Ascending aorta (tissue), 2 donors: ENCODE measurements at regions of chr20 and their contacts with region 1.

Region 1: DNA sequence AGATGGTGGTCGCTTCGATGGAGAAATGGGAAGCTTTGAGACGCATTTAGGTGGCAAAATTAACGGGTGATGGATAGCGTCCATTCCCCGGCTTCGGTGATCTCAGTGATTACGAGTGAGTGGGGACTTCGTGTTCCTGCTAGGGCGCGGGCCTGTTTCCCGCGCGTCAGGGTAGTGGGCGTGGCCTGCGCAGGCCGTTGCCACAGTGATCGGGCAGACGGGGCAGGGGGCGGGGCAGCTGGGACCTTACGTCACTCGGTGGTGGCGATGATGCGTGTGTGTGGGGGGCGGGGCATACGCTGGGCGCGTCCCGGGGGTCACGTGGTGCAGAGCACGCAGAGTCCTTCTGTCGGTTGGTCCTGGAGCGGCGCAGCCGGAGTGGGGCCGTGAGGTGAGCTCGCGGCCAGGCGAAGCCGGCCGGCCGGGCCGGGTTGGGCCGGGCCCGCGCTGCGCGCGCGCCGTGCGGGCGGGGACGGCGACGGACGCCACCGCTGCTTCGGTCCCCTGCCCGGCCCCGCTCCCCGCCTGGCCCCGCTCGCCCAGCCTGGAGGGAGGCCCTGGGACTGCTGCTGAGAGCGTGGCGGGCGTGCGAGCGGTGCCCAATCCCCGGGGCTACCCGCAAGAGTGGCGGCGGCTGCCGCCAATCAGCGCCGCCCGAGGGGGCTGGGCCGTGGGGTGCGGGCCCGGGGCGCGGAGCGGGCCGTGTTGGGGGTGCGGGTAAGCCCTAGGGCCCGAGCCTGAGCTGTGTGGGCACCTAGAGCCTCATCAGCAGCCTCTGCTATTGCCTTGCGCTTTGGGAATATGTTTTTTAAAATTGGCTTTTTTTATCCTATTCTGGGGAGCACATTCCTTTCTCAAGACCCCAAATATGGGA is at the start of gene PHF20:
- DNase-seq: peak; percentile 96 to 100
- H3K4me3 ChIP-seq: peak within 1 kb of the TSS; percentile 85
- H3K27ac ChIP-seq: peak within 1 kb of the TSS; percentile 96 to 98
- H3K4me1 ChIP-seq: peaks cover 0 to 30% of the 10 kb centered on the region in 2 donors
- H3K27me3 ChIP-seq: no peaks in the 10 kb centered on the region
- CTCF ChIP-seq: peak in 1 of 3 experiments; percentile 60
- total RNA-seq, gene PHF20: 109 TPM

Region 2: GRCh38 chr20:35741892-35742740 is 29.8 kb before region 1 on chr20 and contains the start of gene RBM39:
- intact Hi-C with region 1: loop called (anchors 1 kb)
- DNase-seq: peak; percentile 98 to 100
- H3K4me3 ChIP-seq: peak within 1 kb of the TSS; percentile 84 to 86
- H3K27ac ChIP-seq: peak within 1 kb of the TSS; percentile 99 to 100
- H3K4me1 ChIP-seq: peaks cover 10 to 28% of the 10 kb centered on the region in 2 donors
- H3K27me3 ChIP-seq: no peaks in the 10 kb centered on the region
- CTCF ChIP-seq: peak; percentile 22 to 50 (median 42)
- total RNA-seq, gene RBM39: 232 TPM

Region 3: GRCh38 chr20:35806075-35806474 is 34.1 kb after region 1 on chr20:
- intact Hi-C with region 1: no loop called
- DNase-seq: no peak
- H3K4me3 ChIP-seq: no peak overlapping the region
- H3K27ac ChIP-seq: no peak overlapping the region
- H3K4me1 ChIP-seq: no peaks in the 10 kb centered on the region
- H3K27me3 ChIP-seq: no peaks in the 10 kb centered on the region
- CTCF ChIP-seq: no peak

Region 4: DNA sequence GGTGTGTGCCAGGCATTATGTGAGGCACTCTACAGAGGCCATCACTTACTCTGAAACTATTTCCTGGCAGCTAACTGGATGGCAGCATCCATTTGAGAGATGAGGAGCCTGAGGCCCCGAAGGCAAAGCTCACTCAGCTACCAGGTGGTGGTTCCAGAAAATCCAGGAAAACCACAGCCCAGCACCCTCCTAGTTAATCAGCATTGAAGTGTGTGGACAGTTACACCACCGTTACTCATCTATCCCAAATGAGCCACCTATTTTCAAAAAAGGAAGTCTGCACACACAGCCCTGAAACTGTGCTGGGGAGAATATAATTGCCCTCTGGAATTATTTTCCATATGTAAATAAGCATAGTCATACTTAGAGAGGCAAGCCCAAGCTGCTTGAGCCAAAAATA is 263.8 kb after region 1 on chr20:
- intact Hi-C with region 1: no loop called
- DNase-seq: no peak
- H3K4me3 ChIP-seq: no peak overlapping the region
- H3K27ac ChIP-seq: no peak overlapping the region
- H3K4me1 ChIP-seq: no peaks in the 10 kb centered on the region
- H3K27me3 ChIP-seq: no peaks in the 10 kb centered on the region
- CTCF ChIP-seq: no peak

Region 5: GRCh38 chr20:36317675-36318074 is 545.7 kb after region 1 on chr20:
- intact Hi-C with region 1: no loop called
- DNase-seq: no peak
- H3K4me3 ChIP-seq: no peak overlapping the region
- H3K27ac ChIP-seq: no peak overlapping the region
- H3K4me1 ChIP-seq: no peaks in the 10 kb centered on the region
- H3K27me3 ChIP-seq: no peaks in the 10 kb centered on the region
- CTCF ChIP-seq: no peak